GM13977 (cell line): ENCODE measurements at regions of chr20 and their contacts with region 1.

Region 1: GRCh38 chr20:39885975-39886649 is 802.9 kb downstream of the MAFB start:
- DNase-seq: peak; percentile 16
- CTCF ChIP-seq: peak; percentile 82

Region 2: DNA sequence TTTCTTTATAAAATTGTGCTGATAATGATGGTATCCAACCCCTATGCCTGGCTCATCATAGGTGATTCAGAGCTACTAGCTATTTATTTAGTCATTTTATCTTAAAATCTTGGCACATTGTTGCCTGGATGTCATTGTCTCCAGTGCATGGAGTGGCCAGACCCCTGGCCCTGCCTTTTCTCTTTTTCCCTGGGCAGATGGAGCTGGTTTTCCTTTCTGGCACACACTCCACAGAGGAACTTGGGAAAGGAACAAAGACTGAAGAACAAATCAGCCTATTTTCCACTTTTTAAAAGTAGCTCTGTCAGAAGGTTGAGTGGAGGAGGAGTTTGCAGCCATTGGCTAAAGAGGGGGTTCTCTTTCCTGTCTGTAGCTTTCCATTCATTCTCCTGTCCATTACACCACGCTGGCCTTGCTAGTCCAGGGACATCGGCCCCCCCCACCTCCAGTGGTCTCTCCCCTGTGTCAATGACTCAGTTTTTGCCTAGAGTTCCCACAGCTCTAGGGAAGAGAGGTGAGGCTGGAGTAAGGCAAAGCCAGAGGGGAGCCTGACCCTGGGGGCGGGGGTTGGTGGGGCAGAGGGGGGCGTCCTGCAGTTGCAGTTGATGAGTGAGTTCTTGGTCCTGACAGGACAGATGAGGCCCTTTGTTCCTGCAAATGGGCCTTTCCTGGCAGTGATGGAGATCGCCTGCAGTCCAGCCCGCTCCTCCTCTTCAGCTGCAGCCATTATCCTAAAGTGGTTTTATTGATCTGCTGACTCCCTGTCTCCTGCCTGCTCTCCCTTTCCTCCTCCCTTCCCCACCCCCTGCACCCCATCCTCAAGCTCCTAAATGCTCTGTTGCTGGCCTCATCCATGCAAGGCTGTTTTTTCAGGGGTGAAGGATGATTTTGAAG is 149.4 kb before region 1 on chr20:
- in situ Hi-C with region 1: no loop called
- DNase-seq: no peak
- CTCF ChIP-seq: no peak

Region 3: GRCh38 chr20:40110311-40110831 is 224.3 kb after region 1 on chr20:
- in situ Hi-C with region 1: no loop called
- DNase-seq: no peak
- CTCF ChIP-seq: no peak

Region 4: DNA sequence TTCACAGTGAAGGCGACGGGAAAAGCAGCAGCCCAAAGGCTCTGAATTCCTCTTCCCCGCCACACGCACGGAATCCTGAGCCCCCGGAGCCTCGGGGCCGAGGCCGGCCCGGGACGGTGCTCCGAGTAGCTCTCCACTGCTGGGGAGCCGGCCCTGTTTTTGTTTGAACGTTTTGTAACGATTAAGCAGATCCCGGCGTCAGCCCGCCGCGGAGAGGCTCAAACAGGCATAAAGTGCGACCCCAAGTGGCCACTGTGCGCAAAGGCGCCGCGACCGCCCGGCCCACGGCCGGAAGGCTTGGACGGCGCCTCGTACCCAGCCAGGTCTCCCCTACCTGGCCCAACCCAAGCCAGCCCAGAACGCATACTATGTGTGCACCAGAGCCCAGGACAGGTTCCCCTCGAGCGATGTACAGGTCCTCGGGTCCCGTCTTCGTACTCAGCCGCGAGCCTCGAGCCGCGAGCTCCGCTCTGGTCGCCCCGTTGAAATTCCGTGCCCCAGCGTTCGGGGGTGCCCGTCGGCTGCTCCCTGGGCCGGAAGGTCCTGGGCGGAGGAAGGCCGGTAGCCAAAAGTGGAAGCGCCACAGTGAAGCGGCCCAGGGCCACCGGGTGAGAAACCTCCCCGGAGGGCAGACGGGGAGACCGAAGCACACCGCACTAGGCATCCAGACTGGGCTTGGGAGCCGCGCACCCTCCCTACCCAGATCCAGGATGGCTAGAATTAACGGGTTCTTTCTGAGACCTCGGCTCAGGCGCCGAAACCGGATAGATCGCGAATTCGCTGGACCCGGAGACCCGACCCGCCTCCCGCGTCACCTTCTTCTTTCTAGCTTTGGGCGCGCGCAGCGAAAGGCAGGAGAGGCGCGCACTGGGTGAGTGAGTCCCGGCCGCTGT is 804.1 kb after region 1 on chr20:
- in situ Hi-C with region 1: loop called (anchors 25 kb)
- DNase-seq: peak; percentile 90
- CTCF ChIP-seq: peak; percentile 96